ENCODE measurements at regions of chr7 and their contacts with region 1.

Region 1: DNA sequence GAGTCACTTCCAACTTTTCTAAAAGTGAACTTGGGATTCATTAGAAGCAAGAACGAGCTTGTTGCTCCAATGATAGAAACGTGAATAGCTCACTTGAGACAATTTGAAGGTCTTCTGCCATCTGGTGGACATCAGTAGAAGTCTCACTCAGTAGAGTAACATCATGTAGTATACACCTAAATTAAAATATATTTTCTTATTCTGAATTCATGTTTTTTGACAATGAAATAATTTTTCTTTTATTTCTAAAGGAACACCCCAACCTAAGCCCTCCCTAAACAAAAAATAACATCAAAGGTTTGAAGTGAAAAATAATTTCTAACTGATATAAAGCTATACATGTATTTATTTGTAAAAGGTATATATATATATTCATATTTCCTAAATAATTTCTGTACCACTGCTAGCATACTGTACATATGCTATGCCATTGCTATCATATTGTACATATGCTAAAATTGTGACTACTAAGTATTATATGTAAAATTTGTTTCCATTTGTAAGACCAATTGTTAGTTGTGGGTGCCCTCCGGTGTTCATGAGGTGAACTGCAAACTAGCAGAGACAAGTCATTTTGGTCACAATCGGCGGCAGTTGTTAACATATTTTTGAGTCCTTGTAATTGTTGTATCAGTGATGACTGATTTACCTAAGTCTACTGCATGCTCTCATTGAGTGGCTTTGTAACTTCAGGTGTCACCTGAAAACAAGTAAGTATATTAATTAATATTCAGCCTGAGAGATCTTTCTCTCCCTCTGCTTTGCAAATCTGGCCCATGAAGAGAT is 121.9 kb downstream of the PTPRZ1 start:
- DNase-seq: peak; percentile 64
- ATAC-seq: peak; percentile 89
- H3K4me3 ChIP-seq: no peak overlapping the region
- H3K27ac ChIP-seq: no peak overlapping the region
- H3K4me1 ChIP-seq: no peaks in the 10 kb centered on the region
- H3K27me3 ChIP-seq: no peaks in the 10 kb centered on the region; the same call in 1 of the 2 replicates
- CTCF ChIP-seq: peak; percentile 79

Region 2: DNA sequence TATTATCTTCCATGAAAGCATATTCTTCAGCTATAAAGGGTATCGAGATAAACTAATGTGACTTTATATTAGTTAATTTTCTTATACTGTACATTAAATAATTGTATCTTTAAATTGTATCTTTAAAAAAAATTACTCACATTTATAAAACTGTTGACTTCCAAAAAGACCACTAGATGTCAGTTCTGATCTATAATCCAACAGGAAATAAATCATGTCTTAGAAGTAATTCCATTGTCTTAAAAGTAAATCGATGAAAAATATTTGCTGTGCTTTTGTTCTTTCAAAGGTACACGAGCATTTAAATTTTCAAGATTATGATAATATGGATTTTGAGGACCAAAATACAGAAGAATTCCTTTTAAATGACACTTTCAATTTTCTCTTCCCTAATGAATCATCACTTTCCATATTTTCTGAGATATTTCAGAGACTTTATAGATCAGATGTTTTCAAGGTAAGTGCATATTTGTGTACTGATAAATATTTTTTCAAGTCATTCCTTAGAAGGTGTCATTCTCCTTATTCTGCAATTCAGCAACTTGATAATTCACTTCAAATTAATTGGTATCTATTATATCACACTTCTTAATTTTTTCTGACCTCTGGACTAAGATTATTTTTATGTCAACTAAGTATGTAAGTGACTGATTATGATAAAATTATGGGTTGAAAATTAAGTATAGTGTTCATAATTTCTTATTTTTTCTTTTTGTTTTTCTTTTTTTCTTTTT is 867.9 kb before region 1 on chr7:
- CTCF ChIA-PET with region 1: no interaction called
- POLR2A ChIA-PET with region 1: no interaction called
- in situ Hi-C with region 1: no loop called
- intact Hi-C with region 1: loop called (anchors 2 kb)
- DNase-seq: peak; percentile 25
- ATAC-seq: no peak
- H3K4me3 ChIP-seq: no peak overlapping the region
- H3K27ac ChIP-seq: no peak overlapping the region
- H3K4me1 ChIP-seq: no peaks in the 10 kb centered on the region
- H3K27me3 ChIP-seq: no peaks in the 10 kb centered on the region
- CTCF ChIP-seq: peak; percentile 28; the same call in 1 of the 2 replicates

Region 3: GRCh38 chr7:121366852-121367431 is 627.9 kb before region 1 on chr7:
- CTCF ChIA-PET with region 1: interaction called, 13 read pairs
- POLR2A ChIA-PET with region 1: no interaction called
- in situ Hi-C with region 1: no loop called
- intact Hi-C with region 1: loop called (anchors 5 kb)
- DNase-seq: peak; percentile 30
- ATAC-seq: no peak
- H3K4me3 ChIP-seq: no peak overlapping the region
- H3K27ac ChIP-seq: no peak overlapping the region
- H3K4me1 ChIP-seq: no peaks in the 10 kb centered on the region; the same call in none of the 2 replicates
- H3K27me3 ChIP-seq: no peaks in the 10 kb centered on the region
- CTCF ChIP-seq: peak; percentile 75; the same call in 1 of the 2 replicates

Region 4: DNA sequence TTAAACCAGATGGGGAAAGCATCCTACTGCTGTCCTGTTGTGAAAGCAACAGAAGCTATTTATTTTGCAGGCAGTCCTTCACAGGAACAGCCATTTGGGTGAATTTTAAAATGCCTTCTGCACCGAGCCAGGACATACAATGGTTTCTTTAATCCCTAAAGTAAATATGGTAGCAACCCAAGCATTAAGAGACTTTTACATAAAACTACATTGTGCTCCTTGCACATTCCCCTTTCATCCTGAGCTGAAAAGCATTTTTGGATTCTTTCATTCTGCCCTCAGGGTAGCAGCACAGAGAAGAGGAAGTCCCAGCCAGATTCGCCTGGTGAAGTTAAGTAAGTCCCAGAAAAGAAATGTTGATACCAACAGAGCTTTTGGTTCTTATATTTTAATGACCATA is 514.8 kb before region 1 on chr7:
- CTCF ChIA-PET with region 1: no interaction called
- POLR2A ChIA-PET with region 1: no interaction called
- in situ Hi-C with region 1: no loop called
- intact Hi-C with region 1: no loop called
- DNase-seq: no peak
- ATAC-seq: no peak
- H3K4me3 ChIP-seq: no peak overlapping the region
- H3K27ac ChIP-seq: no peak overlapping the region
- H3K4me1 ChIP-seq: no peaks in the 10 kb centered on the region
- H3K27me3 ChIP-seq: no peaks in the 10 kb centered on the region
- CTCF ChIP-seq: no peak

Region 5: DNA sequence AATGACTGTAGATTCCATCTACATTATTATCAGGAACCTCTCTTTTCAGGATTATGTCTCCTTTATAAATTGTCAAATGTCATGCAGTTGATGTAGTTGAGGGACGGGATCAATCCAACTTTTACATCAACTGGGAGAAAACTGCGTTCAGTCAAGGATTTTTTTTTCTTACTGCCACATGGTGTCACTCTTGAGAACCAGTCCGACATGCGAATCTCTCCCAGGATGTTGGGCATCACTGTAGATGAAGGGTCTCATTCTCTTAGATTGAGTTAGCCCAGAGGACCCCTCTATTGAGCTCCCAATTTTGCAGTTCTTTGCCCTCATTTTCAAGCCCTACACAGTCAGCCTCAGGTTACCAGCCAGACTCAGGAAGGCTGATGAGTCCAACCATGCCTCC is 242.1 kb before region 1 on chr7:
- CTCF ChIA-PET with region 1: interaction called, 3 read pairs
- POLR2A ChIA-PET with region 1: no interaction called
- in situ Hi-C with region 1: no loop called
- intact Hi-C with region 1: loop called (anchors 2 kb)
- DNase-seq: peak; percentile 7
- ATAC-seq: no peak
- H3K4me3 ChIP-seq: no peak overlapping the region
- H3K27ac ChIP-seq: no peak overlapping the region
- H3K4me1 ChIP-seq: no peaks in the 10 kb centered on the region
- H3K27me3 ChIP-seq: peaks cover 6% of the 10 kb centered on the region; the same call in 1 of the 2 replicates
- CTCF ChIP-seq: peak; percentile 63

Measured in Panc1 (cell line).